ENCODE measurements at regions of chr22 and their contacts with region 1.

Region 1: DNA sequence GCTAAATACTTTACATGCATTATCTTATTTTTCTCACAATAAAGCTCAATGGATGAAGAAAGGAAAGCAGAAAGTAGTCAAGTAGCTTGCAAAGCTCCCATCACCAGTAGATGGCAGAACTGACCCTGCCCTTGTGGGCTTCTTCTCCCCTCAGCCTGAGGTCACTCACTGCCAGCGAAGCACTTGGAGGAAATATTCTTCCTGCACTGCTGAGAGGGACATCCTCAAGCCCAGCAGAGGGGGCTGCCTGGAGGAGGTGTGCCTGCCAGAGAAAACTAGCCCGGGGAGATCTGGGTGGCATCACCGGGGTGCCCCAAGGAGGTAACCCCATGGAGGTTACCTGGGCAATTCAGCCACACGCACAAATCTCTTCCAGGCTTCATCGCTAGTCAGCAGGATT is 6.6 kb downstream of the APOL4 start:
- DNase-seq: peak in 4 of 5 donors; percentile 28 to 32 (median 30)
- H3K4me3 ChIP-seq: no peak overlapping the region
- H3K4me3 Mint-ChIP-seq: no peak overlapping the region
- H3K27ac ChIP-seq: no peak overlapping the region
- H3K27ac Mint-ChIP-seq: no peak overlapping the region
- H3K4me1 ChIP-seq: no peaks in the 10 kb centered on the region
- H3K4me1 Mint-ChIP-seq: peaks cover 2 to 22% (median 6%) of the 10 kb centered on the region in 4 donors
- H3K27me3 ChIP-seq: no peaks in the 10 kb centered on the region
- H3K27me3 Mint-ChIP-seq: peaks cover 4 to 8% of the 10 kb centered on the region in 2 donors

Region 2: GRCh38 chr22:36486619-36487384 is 291.8 kb after region 1 on chr22:
- CTCF ChIA-PET with region 1: interaction called, 11 read pairs
- POLR2A ChIA-PET with region 1: no interaction called
- intact Hi-C with region 1: no loop called
- DNase-seq: peak; percentile 61 to 72 (median 63)
- H3K4me3 ChIP-seq: no peak overlapping the region
- H3K4me3 Mint-ChIP-seq: no peak overlapping the region
- H3K27ac ChIP-seq: no peak overlapping the region
- H3K27ac Mint-ChIP-seq: peak overlapping the region in 3 of 7 donors; percentile 43 to 65 (median 64)
- H3K4me1 ChIP-seq: peaks cover 5% of the 10 kb centered on the region
- H3K4me1 Mint-ChIP-seq: peaks cover 4 to 12% (median 5%) of the 10 kb centered on the region in 4 donors
- H3K27me3 ChIP-seq: no peaks in the 10 kb centered on the region
- H3K27me3 Mint-ChIP-seq: no peaks in the 10 kb centered on the region

Measured in CD4-positive, alpha-beta memory T cell (primary cell).